Prostate gland (tissue), 2 donors: ENCODE measurements at regions of chr16 and their contacts with region 1.

Region 1: DNA sequence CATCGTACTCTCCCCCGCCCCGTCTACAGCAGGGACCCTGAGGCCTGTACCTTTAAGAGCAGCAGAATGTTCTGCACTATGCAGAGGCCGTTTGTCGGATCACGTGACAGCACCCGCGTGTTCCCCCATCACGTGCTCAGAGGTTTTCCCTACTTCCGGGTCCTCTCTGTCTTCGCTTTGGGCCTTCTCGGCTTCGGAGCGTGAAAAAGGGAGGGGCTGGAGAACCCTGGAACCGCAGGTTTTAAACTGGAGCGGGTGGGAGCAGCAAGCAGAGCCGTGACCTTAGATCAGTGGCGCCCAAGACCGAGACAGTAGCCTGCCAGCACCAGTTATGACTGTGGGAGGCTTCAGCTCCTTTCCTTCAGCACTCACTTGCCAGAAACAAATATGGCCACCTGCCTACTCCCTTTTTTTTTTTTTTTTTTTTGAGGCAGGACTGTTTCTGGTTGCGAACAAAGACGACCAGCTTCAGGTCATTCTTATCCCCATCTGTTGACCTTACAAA is at the start of gene CLN3:
- DNase-seq: peak; percentile 91
- H3K4me3 ChIP-seq: peak within 1 kb of the TSS; percentile 73 to 95
- H3K27ac ChIP-seq: peak within 1 kb of the TSS; percentile 91 to 94
- H3K4me1 ChIP-seq: no peaks in the 10 kb centered on the region
- H3K27me3 ChIP-seq: no peaks in the 10 kb centered on the region
- CTCF ChIP-seq: no peak
- POLR2A ChIP-seq: peak; percentile 50
- total RNA-seq, gene CLN3: 30.6 to 47.3 TPM

Region 2: DNA sequence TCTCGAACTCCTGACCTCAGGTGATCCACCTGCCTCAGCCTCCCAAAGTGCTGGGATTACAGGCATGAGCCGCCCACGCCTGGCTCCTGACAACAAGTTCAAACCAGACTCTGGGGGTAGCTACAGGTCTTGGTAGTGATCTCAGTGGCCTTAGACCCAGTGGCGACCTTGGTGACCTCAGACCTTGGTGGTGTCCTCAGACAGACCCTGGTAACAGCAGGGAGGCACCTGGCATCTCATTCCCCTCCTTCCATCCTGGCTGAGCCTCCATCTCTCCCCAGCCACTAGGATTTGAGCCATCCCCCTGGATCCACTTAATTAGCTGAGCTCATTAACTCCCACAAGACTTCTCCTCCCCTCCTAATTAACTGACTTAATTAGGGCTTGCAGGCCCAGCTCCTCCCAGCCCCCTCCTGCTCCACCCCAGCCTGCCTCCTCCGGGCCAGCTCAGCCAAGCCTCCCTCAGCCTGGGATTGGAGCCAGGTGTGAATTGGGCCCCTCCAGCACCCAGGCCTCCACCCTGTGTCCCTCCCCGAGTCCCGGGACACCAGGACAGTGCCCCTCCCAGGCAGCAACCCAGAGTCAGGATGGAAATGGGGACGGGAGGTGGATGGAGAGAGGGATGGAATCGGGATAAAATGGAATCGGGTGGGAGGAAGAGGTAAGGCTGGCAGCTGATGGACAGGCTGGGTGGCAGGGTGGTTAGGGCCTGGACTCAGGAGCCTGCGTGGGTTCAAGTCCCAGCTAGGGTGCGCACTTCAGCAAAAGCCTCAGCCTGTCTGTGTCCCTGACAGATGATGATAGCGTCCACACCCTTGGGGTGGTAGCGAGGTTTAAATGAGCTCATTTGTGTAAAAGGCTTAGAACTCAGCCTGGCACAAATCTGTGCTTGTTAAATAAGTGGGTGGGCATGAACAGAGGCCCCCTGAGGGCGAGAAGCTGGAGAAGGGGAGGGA is 210.9 kb before region 1 on chr16:
- intact Hi-C with region 1: no loop called
- DNase-seq: no peak
- H3K4me3 ChIP-seq: no peak overlapping the region
- H3K27ac ChIP-seq: no peak overlapping the region
- H3K4me1 ChIP-seq: no peaks in the 10 kb centered on the region
- H3K27me3 ChIP-seq: no peaks in the 10 kb centered on the region
- CTCF ChIP-seq: no peak
- POLR2A ChIP-seq: no peak

Region 3: DNA sequence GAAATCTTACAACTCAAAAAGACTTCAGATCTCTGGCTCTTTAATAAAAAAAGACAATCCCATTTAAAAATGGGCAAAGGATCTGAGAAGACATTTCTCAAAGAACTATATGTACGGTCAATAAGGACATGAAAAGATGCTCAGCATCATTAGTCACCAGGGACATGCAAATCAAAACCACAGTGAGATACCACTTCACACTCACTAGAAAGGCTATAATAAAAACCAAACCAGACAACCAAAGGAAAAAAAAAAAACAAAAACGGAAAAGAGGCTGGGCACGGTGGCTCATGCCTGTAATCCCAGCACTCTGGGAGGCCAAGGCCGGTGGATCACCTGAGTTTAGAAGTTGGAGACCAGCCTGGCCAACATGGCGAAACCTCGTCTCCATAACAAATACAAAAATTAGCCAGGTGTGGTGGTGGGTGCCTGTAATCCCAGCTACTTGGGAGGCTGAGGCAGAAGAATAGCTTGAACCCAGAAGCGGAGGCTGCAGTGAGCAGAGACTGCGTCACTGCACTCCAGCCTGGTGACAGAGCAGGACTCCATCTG is 18.2 kb before region 1 on chr16:
- intact Hi-C with region 1: no loop called
- DNase-seq: no peak
- H3K4me3 ChIP-seq: no peak overlapping the region
- H3K27ac ChIP-seq: no peak overlapping the region
- H3K4me1 ChIP-seq: no peaks in the 10 kb centered on the region
- H3K27me3 ChIP-seq: no peaks in the 10 kb centered on the region
- CTCF ChIP-seq: no peak
- POLR2A ChIP-seq: no peak

Region 4: GRCh38 chr16:28538733-28539596 is 46.9 kb after region 1 on chr16 and contains the start of gene NUPR1:
- intact Hi-C with region 1: loop called (anchors 5 kb)
- DNase-seq: peak; percentile 99
- H3K4me3 ChIP-seq: peak within 1 kb of the TSS; percentile 36 to 49
- H3K27ac ChIP-seq: peak within 1 kb of the TSS; percentile 94 to 95
- H3K4me1 ChIP-seq: no peaks in the 10 kb centered on the region
- H3K27me3 ChIP-seq: no peaks in the 10 kb centered on the region
- CTCF ChIP-seq: no peak
- POLR2A ChIP-seq: peak; percentile 93
- total RNA-seq, gene NUPR1: 79.6 to 107 TPM

Region 5: DNA sequence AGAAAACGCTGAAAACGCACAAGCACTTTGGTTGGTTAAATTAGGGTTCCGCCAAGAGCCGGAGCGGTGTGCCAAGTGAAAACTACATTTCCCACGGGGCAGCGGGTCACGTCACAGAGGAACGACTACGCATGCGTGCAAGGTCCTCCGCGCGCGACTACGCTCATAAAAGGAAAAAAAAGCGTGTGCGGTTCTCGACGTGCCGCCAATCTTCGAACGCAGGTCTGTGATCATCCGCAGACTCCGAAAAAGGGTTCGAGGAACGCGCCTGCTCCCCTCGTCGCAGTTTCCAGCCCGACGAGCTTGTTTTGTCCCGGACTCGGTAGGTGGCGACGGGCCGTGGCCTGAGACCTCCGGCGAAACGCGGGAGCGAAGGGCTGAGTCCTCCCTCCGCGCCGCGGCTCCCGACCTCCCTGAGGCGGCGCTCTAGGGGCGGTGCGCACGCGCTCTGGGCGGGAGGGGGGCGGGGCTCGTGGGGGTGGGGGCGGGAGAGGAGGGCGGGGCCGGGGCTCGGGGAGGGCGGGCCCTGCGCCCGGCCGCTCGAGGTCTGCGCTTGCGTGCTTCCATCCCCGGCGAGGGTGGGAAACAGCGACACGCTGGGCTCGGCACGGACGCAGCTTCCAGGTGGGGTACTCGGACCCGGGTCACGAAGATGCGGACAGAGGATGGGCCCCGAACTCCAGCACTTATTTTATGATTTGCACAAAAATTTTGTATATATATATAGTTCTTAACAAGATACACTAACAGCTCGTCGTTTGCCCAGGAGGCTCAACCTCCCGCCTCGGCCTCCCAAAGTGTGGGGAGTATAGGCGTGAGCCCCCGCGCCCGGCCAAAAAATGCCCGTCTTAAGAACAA is 62.0 kb after region 1 on chr16 and contains the start of gene SGF29:
- intact Hi-C with region 1: loop called (anchors 5 kb)
- DNase-seq: peak; percentile 89
- H3K4me3 ChIP-seq: peak within 1 kb of the TSS; percentile 62 to 65
- H3K27ac ChIP-seq: peak within 1 kb of the TSS; percentile 98 to 99
- H3K4me1 ChIP-seq: no peaks in the 10 kb centered on the region
- H3K27me3 ChIP-seq: no peaks in the 10 kb centered on the region
- CTCF ChIP-seq: peak in 3 of 4 experiments; percentile 21 to 45 (median 37)
- POLR2A ChIP-seq: peak; percentile 92
- total RNA-seq, gene SGF29: 32.2 to 59.7 TPM

Region 6: GRCh38 chr16:28609631-28610594 is 117.9 kb after region 1 on chr16 and contains the start of gene SULT1A1:
- intact Hi-C with region 1: loop called (anchors 10 kb)
- DNase-seq: no peak
- H3K4me3 ChIP-seq: no peak within 1 kb of the TSS
- H3K27ac ChIP-seq: peak within 1 kb of the TSS in 1 of 2 donors; percentile 12
- H3K4me1 ChIP-seq: no peaks in the 10 kb centered on the region
- H3K27me3 ChIP-seq: no peaks in the 10 kb centered on the region
- CTCF ChIP-seq: no peak
- POLR2A ChIP-seq: no peak
- total RNA-seq, gene SULT1A1: 17.6 to 21.5 TPM